A549 (cell line): ENCODE measurements at regions of chr17 and their contacts with region 1.

Region 1: DNA sequence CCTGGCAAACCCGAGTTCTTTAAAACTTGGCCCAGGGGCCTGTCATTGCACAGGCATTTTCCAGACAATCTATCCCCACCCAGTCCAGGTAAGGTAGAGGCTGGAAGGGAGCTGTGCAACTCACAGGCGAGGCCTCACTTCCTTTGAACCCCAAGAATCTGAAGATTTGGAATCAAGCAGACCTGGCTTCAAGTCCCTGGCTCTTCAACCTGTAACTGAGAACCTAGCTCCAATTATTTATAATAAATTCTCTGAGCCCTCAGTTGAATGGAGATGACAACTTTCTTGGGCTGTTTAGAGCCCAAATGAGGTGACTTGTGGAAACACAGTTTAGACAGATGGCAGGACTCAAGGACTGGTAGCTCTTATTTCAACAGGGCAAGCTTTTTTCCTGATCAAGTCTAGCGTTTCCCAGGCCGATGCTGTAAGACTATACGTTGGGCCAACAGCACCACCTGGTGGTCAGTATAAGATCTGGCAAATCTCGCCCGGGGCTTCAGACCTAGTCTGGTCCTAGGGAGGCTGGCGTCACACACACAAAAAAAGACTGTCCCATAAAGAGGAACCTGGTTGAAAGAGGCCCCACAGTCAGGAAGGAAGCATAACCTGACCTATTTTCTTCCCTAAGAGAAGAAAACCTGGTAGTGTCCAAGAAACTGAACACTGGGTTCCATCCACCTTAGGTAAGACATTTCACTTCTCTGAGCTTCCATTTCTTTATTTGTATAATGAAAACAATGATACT is 117.9 kb downstream of the C17orf67 start:
- DNase-seq: peak; percentile 84 to 88
- ATAC-seq: peak; percentile 94 to 99
- H3K4me3 ChIP-seq: no peak overlapping the region
- H3K27ac ChIP-seq: no peak overlapping the region
- H3K4me1 ChIP-seq: no peaks in the 10 kb centered on the region
- CTCF ChIP-seq: peak; percentile 93
- EP300 ChIP-seq: no peak
- POLR2A ChIP-seq: no peak
- RAD21 ChIP-seq: peak; percentile 97

Region 2: GRCh38 chr17:56499799-56500388 is 215.9 kb before region 1 on chr17:
- CTCF ChIA-PET with region 1: interaction called, 61 read pairs
- POLR2A ChIA-PET with region 1: no interaction called
- DNase-seq: peak in 1 of 2 experiments; percentile 66
- ATAC-seq: peak in 1 of 2 experiments; percentile 50; a peak in 2 of 6 replicates
- H3K4me3 ChIP-seq: no peak overlapping the region
- H3K27ac ChIP-seq: no peak overlapping the region
- H3K4me1 ChIP-seq: peaks cover under 1% of the 10 kb centered on the region; the same call in 1 of the 3 replicates
- CTCF ChIP-seq: peak; percentile 73
- EP300 ChIP-seq: no peak
- POLR2A ChIP-seq: no peak
- RAD21 ChIP-seq: peak; percentile 70 to 76

Region 3: GRCh38 chr17:56570199-56570598 is 145.6 kb before region 1 on chr17:
- CTCF ChIA-PET with region 1: no interaction called
- POLR2A ChIA-PET with region 1: no interaction called
- DNase-seq: no peak
- ATAC-seq: no peak
- H3K4me3 ChIP-seq: no peak overlapping the region
- H3K27ac ChIP-seq: no peak overlapping the region
- H3K4me1 ChIP-seq: no peaks in the 10 kb centered on the region
- CTCF ChIP-seq: no peak
- EP300 ChIP-seq: no peak
- POLR2A ChIP-seq: no peak; the same call in 1 of the 2 replicates
- RAD21 ChIP-seq: no peak

Region 4: DNA sequence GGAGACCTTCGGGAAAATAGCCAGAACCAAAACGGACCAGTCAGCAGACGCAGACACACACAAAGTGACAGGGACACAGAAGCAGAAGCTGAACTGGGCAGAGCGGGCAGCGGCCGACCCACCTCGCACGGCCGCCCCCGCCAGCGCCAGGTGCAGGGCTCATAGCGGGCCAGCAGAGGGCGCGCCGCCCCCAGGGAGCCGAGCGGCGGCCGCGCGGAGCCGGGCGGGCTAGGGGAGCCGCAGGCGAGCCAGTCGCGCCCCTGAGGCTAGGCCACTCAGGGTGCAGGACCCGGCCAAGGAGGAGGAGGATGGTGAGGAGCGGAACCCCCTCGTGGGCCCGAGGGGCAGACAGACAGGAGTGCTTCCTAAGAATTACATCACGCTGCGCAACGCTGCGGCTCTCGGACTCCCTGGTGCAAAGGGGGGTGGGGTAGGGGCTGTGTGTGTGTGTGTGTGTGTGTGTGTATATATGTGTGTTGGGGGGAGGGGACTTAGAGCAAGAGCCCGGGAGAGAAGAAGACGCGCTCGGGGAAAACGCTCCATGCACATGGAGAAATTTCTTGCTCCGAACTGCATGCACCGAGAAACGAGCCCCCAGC is 123.2 kb before region 1 on chr17:
- CTCF ChIA-PET with region 1: interaction called, 400 read pairs
- POLR2A ChIA-PET with region 1: interaction called, 19 read pairs
- DNase-seq: peak; percentile 64 to 84
- ATAC-seq: peak; percentile 44 to 74
- H3K4me3 ChIP-seq: peak overlapping the region; percentile 51
- H3K27ac ChIP-seq: peak overlapping the region; percentile 75 to 87; a peak in 5 of 6 replicates
- H3K4me1 ChIP-seq: peaks cover 32% of the 10 kb centered on the region
- CTCF ChIP-seq: peak; percentile 99
- EP300 ChIP-seq: no peak
- POLR2A ChIP-seq: no peak
- RAD21 ChIP-seq: peak; percentile 84 to 99

Region 5: DNA sequence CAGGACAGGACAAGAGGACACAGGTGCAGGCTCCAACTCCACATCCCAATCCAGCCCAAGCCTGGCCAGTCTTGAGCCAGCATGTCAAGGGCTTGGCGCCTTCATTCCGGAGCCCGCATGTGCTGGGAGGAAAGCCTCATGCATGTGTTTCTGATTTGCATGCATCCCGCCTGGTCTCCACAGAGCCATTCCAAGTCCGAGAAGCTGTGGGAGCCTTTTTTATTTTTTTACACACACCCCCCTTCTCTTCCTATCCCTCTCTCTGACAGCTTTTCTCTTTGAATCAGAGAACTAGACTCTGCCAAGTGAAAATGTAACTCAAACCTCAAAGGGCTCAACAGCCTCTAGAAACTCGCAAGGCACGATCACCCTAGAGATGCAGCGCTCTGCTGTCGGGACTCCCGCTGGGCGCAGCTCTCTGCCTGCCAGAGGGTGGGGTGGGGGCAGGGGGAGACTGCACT is 77.2 kb before region 1 on chr17:
- CTCF ChIA-PET with region 1: interaction called, 29 read pairs
- POLR2A ChIA-PET with region 1: no interaction called
- DNase-seq: no peak
- ATAC-seq: no peak
- H3K4me3 ChIP-seq: no peak overlapping the region
- H3K27ac ChIP-seq: no peak overlapping the region
- H3K4me1 ChIP-seq: 0 out of 3 replicates have a peak, but pooled peaks cover 3% of the 10 kb centered on the region
- CTCF ChIP-seq: no peak
- EP300 ChIP-seq: no peak
- POLR2A ChIP-seq: no peak
- RAD21 ChIP-seq: no peak

Region 6: DNA sequence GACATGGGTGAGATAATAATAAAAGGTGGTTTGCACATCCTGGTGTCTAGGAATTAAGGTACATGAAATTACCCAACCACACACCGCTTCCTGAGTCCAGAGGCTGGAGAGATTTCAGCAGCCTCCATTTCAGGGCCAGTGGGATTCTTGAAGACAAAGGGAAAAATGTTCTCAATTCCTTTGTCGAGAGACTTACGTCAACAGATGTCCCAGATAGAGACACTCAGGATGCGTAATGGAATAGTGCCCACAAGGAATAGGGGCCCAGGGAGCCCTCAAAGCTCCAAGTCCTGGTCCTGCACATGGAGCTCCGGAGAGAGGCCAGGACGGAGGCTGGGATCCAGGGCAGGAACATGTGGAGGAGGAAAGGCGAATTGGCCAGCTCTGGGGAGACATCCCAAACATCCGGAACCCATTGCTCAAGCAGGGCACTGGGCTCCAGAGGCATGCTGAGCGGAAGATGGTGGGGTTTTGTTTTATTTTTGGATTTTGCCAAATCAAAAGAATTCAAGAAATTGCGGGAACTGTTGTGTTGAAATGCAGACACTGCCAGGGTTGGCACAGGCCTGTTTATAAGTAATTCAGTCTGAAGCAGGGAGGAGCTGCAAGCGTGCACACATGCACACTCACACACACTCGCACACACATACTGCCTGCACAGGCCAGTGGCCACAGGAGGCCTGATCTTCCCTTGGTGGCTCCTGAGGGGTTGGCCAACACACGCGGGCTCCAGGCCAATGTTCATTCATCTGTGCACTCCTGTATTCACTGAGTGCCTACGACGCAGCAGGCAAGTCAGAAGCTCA is 25.1 kb before region 1 on chr17:
- CTCF ChIA-PET with region 1: interaction called, 183 read pairs
- POLR2A ChIA-PET with region 1: no interaction called
- DNase-seq: no peak
- ATAC-seq: peak; percentile 44 to 57; a peak in 5 of 6 replicates
- H3K4me3 ChIP-seq: no peak overlapping the region
- H3K27ac ChIP-seq: no peak overlapping the region
- H3K4me1 ChIP-seq: no peaks in the 10 kb centered on the region
- CTCF ChIP-seq: no peak
- EP300 ChIP-seq: no peak
- POLR2A ChIP-seq: no peak
- RAD21 ChIP-seq: no peak

Region 7: DNA sequence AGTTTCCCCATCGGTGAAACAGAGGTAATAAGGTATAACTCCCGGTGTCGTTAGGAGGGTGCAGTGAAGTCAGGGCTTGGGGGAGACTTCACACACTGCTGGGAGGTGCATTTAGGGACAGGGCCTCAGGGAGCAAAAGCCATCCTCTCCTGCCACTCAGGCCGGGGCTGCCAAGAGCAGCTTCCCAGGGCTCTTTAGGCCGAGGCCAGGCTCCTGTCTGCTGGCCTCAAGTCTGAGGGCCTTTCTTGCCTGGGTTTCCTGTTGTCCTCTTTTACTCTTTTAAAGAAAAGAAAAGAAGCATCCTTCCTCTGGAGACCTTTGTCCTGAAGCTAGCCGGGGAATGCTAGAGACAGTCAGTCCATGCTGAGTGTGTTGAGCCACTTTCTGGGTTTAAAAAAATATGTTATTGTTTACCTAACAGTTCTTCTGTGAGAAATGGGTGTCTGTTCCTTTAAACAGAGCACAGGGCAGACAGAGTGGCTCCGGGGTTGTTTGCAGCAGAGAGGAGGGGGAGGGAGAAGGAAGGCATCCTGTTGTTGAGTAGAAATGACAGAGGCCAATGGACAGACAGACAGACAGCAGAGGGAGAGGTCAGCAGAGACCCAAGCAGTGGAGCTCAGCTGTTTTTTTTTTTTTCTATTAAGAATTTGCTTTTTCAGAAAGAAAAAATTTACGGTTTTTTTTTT is 38.9 kb after region 1 on chr17:
- CTCF ChIA-PET with region 1: interaction called, 23 read pairs
- POLR2A ChIA-PET with region 1: no interaction called
- DNase-seq: peak; percentile 53 to 70
- ATAC-seq: peak; percentile 66 to 92; a peak in 5 of 6 replicates
- H3K4me3 ChIP-seq: no peak overlapping the region
- H3K27ac ChIP-seq: peak overlapping the region; percentile 54 to 75
- H3K4me1 ChIP-seq: peaks cover 20% of the 10 kb centered on the region
- CTCF ChIP-seq: no peak
- EP300 ChIP-seq: no peak
- POLR2A ChIP-seq: no peak
- RAD21 ChIP-seq: no peak

Region 8: GRCh38 chr17:56891784-56892183 is 176.0 kb after region 1 on chr17:
- CTCF ChIA-PET with region 1: no interaction called
- POLR2A ChIA-PET with region 1: no interaction called
- DNase-seq: peak in 1 of 2 experiments; percentile 30
- ATAC-seq: peak in 1 of 2 experiments; percentile 57; a peak in 3 of 6 replicates
- H3K4me3 ChIP-seq: no peak overlapping the region
- H3K27ac ChIP-seq: no peak overlapping the region
- H3K4me1 ChIP-seq: peaks cover 6% of the 10 kb centered on the region
- CTCF ChIP-seq: 0 out of 3 replicates have a peak, but pooled peaks have one; percentile 22
- EP300 ChIP-seq: no peak
- POLR2A ChIP-seq: no peak
- RAD21 ChIP-seq: no peak